ENCODE measurements at regions of chr16 and their contacts with region 1.

Region 1: GRCh38 chr16:71311553-71312158 is 22.5 kb upstream of the CMTR2 start:
- DNase-seq: peak in 5 of 9 donors; percentile 3 to 35 (median 19)
- ATAC-seq: peak; percentile 58
- H3K4me3 ChIP-seq: no peak overlapping the region
- H3K4me3 Mint-ChIP-seq: no peak overlapping the region
- H3K27ac ChIP-seq: no peak overlapping the region
- H3K27ac Mint-ChIP-seq: no peak overlapping the region
- H3K4me1 ChIP-seq: no peaks in the 10 kb centered on the region
- H3K4me1 Mint-ChIP-seq: no peaks in the 10 kb centered on the region
- H3K27me3 ChIP-seq: peaks cover 0 to 5% of the 10 kb centered on the region in 2 donors
- H3K27me3 Mint-ChIP-seq: peaks cover 14 to 77% (median 74%) of the 10 kb centered on the region in 5 donors

Region 2: GRCh38 chr16:71214746-71215381 is 96.8 kb before region 1 on chr16:
- CTCF ChIA-PET with region 1: no interaction called
- POLR2A ChIA-PET with region 1: no interaction called
- intact Hi-C with region 1: loop called (anchors 1 to 2 kb)
- DNase-seq: peak in 1 of 9 donors; percentile 2
- ATAC-seq: no peak
- H3K4me3 ChIP-seq: no peak overlapping the region
- H3K4me3 Mint-ChIP-seq: no peak overlapping the region
- H3K27ac ChIP-seq: no peak overlapping the region
- H3K27ac Mint-ChIP-seq: no peak overlapping the region
- H3K4me1 ChIP-seq: no peaks in the 10 kb centered on the region
- H3K4me1 Mint-ChIP-seq: no peaks in the 10 kb centered on the region
- H3K27me3 ChIP-seq: no peaks in the 10 kb centered on the region
- H3K27me3 Mint-ChIP-seq: peaks cover 5 to 44% (median 33%) of the 10 kb centered on the region in 5 donors

Region 3: DNA sequence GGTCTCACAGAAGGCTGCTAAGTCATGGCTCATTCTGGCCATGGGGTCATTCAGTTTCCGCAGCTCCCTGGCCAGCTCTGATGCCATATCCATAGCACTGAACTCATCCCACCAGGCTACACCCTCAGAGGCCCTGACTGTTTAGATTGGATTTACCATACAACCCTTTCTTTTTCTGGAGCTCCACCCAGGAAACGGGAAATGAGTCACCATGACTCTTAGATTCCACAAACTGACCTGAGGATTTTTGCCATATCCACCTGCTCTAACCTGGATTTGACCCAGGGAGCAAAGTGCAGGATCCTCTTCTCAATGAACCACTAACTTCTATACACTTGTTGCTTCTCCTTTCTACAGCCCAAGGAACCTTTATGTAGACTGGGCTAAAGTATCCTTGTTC is 26.5 kb after region 1 on chr16:
- CTCF ChIA-PET with region 1: no interaction called
- POLR2A ChIA-PET with region 1: no interaction called
- intact Hi-C with region 1: no loop called
- DNase-seq: no peak
- ATAC-seq: no peak
- H3K4me3 ChIP-seq: no peak overlapping the region
- H3K4me3 Mint-ChIP-seq: no peak overlapping the region
- H3K27ac ChIP-seq: no peak overlapping the region
- H3K27ac Mint-ChIP-seq: no peak overlapping the region
- H3K4me1 ChIP-seq: no peaks in the 10 kb centered on the region
- H3K4me1 Mint-ChIP-seq: peaks cover 0 to 2% (median 0%) of the 10 kb centered on the region in 7 donors
- H3K27me3 ChIP-seq: no peaks in the 10 kb centered on the region
- H3K27me3 Mint-ChIP-seq: peaks cover 2 to 45% (median 31%) of the 10 kb centered on the region in 5 donors

Measured in naive thymus-derived CD4-positive, alpha-beta T cell (primary cell).